H1 (cell line): ENCODE measurements at regions of chr7 and their contacts with region 1.

Region 1: GRCh38 chr7:100171087-100171681 is 2.8 kb upstream of the GAL3ST4 start:
- DNase-seq: peak in 1 of 2 experiments; percentile 84
- H3K4me3 ChIP-seq: peak overlapping the region; percentile 47 to 67 (median 56)
- H3K27ac ChIP-seq: no peak overlapping the region
- H3K4me1 ChIP-seq: peaks cover 11 to 30% (median 19%) of the 10 kb centered on the region in 4 experiments
- H3K27me3 ChIP-seq: peaks cover 0 to 10% (median 2%) of the 10 kb centered on the region in 4 experiments; a peak in 2 of 7 replicates
- CTCF ChIP-seq: no peak
- EP300 ChIP-seq: no peak
- POLR2A ChIP-seq: 0 out of 3 replicates have a peak, but pooled peaks of 1 of the 2 experiments have one; percentile 38
- RAD21 ChIP-seq: no peak

Region 2: GRCh38 chr7:100158229-100159098 is 12.7 kb before region 1 on chr7 and contains the start of gene TRAPPC14:
- CTCF ChIA-PET with region 1: interaction called, 5 read pairs
- POLR2A ChIA-PET with region 1: interaction called, 145 read pairs
- DNase-seq: peak; percentile 83 to 99
- H3K4me3 ChIP-seq: peak within 1 kb of the TSS; percentile 57 to 88 (median 80)
- H3K27ac ChIP-seq: peak within 1 kb of the TSS; percentile 24; the same call in 1 of the 2 replicates
- H3K4me1 ChIP-seq: peaks cover 0 to 15% (median 9%) of the 10 kb centered on the region in 4 experiments; a peak in 5 of 7 replicates
- H3K27me3 ChIP-seq: no peaks in the 10 kb centered on the region
- CTCF ChIP-seq: no peak
- EP300 ChIP-seq: peak in 1 of 2 experiments; percentile 48; a peak in 1 of 3 replicates
- POLR2A ChIP-seq: peak; percentile 16 to 30; a peak in 1 of 3 replicates
- RAD21 ChIP-seq: no peak
- total RNA-seq, gene TRAPPC14: 20.2 and 22.1 TPM in 2 replicates

Region 3: GRCh38 chr7:100215895-100216294 is 44.7 kb after region 1 on chr7:
- CTCF ChIA-PET with region 1: interaction called, 18 read pairs
- POLR2A ChIA-PET with region 1: interaction called, 8 read pairs
- DNase-seq: no peak
- H3K4me3 ChIP-seq: no peak overlapping the region
- H3K27ac ChIP-seq: no peak overlapping the region
- H3K4me1 ChIP-seq: peaks cover 0 to 4% (median 1%) of the 10 kb centered on the region in 4 experiments; a peak in 1 of 7 replicates
- H3K27me3 ChIP-seq: peaks cover 0 to 4% (median 2%) of the 10 kb centered on the region in 4 experiments; a peak in 3 of 7 replicates
- CTCF ChIP-seq: no peak
- EP300 ChIP-seq: no peak
- POLR2A ChIP-seq: no peak
- RAD21 ChIP-seq: no peak